Sigmoid colon (tissue), 7 donors: ENCODE measurements at regions of chr7 and their contacts with region 1.

Region 1: DNA sequence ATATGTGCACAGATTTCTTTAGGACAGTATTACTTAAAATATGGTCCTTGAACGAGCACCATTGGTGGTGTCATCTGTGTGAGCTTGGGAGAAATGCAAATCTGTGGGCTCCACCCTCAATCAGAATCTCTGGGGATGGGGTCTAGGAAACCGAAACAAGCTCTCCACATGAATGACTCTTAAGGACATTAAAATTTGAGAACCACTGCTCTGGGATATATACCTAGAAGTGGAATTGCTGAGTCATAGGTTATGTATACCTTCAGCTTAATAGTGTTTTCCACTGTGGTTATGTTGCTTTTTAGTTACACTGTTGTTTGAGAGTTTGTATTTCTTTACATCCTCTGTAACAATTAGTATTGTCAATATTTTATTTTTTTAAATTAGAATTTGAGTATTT is 24.0 kb downstream of the ZNRF2 start:
- DNase-seq: no peak
- H3K4me3 ChIP-seq: no peak overlapping the region
- H3K27ac ChIP-seq: no peak overlapping the region
- H3K4me1 ChIP-seq: peaks cover 0 to 45% (median 12%) of the 10 kb centered on the region in 4 donors
- H3K27me3 ChIP-seq: no peaks in the 10 kb centered on the region
- CTCF ChIP-seq: no peak
- EP300 ChIP-seq: no peak
- POLR2A ChIP-seq: no peak

Region 2: DNA sequence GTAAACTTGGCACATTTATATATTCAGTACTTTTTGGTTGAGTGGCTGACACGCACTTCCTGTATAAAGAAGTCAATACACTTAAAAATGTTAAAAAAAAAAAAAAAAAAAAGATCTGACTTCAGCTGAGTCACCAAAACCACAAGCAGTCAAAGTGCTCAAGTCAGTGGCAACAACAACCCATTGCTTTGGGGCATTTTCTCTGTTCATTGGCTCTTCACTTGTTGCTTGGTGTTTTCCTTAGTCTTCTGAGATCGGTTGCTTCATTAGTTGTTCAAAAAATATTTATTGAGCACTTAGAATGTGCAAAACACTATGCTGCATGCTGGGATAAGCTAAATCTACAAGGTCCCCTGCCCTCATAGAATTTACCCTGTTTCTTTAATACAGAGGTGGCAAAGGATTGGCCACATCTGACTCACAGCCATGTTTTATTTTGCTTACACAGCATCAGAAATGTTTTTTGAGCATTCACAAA is 39.7 kb after region 1 on chr7:
- intact Hi-C with region 1: loop called (anchors 5 kb)
- DNase-seq: no peak
- H3K4me3 ChIP-seq: no peak overlapping the region
- H3K27ac ChIP-seq: peak overlapping the region in 2 of 4 donors; percentile 12 to 23
- H3K4me1 ChIP-seq: peaks cover 0 to 36% (median 8%) of the 10 kb centered on the region in 4 donors
- H3K27me3 ChIP-seq: no peaks in the 10 kb centered on the region
- CTCF ChIP-seq: no peak
- EP300 ChIP-seq: no peak
- POLR2A ChIP-seq: no peak

Region 3: GRCh38 chr7:30369879-30370278 is 61.5 kb after region 1 on chr7:
- intact Hi-C with region 1: no loop called
- DNase-seq: no peak
- H3K4me3 ChIP-seq: no peak overlapping the region
- H3K27ac ChIP-seq: no peak overlapping the region
- H3K4me1 ChIP-seq: no peaks in the 10 kb centered on the region
- H3K27me3 ChIP-seq: no peaks in the 10 kb centered on the region
- CTCF ChIP-seq: no peak
- EP300 ChIP-seq: no peak
- POLR2A ChIP-seq: no peak